ENCODE measurements at regions of chr18 and their contacts with region 1.

Region 1: DNA sequence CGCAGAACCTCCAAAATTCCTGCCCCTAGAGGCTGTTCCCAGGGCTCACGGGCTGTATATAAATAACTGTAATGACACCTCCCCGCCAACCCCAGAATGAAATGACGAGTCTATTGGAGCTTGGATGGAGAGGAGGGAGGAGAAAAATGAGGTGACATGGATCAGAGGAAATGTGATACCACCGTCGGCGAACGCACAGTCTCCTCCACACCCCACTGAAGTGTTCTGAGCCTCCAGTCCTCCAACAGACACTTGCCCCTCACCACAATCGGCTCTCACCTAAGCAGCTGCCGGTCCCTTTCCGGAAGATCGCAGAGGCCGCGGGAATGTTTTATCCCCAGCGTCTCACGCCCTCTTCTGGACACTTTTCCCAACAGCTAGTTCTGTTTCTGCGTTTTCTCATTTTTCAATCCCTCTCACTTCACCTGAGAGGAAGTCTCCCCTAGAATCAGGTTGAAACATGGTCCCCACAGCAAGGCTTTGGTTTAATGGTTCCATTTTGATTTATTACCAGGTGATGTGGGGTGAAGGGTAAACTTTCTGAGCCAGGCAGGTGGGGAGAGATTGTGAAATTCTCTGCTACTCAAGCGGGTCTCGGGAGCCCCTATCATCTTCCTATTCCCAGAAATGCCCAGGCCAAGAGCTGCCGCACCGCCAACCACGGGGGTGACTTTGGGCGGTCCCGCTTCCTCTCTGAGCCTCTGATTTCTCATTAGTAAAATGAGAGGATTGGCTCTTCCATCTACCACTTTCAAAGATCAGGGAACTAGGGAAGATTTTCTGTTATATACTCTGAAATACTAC is 9.1 kb upstream of the MYO5B start:
- DNase-seq: peak; percentile 72
- H3K4me3 Mint-ChIP-seq: no peak overlapping the region
- H3K27ac Mint-ChIP-seq: no peak overlapping the region
- H3K4me1 Mint-ChIP-seq: peaks cover 13% of the 10 kb centered on the region
- H3K27me3 Mint-ChIP-seq: peaks cover 2% of the 10 kb centered on the region
- CTCF ChIP-seq: peak; percentile 73

Region 2: DNA sequence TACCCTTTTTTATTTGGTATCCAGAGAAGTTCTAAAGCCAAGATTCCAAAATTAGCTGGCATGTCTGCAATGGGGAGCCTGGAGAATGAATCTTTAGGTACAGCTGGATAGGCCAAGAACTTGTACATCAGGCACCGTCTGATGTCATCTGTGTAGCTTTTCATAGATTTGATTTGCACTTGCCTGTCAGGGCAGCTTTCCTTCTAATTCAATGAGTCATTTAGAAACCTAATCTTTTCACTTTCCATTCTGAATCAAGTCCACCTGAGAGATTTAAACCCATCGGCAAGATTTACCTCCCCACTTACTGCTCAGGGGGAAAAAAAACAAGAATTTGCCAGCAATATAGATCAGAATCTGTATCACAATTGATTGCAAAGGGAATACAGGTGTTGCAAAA is 329.8 kb before region 1 on chr18:
- CTCF ChIA-PET with region 1: no interaction called
- intact Hi-C with region 1: no loop called
- DNase-seq: no peak
- H3K4me3 Mint-ChIP-seq: no peak overlapping the region
- H3K27ac Mint-ChIP-seq: no peak overlapping the region
- H3K4me1 Mint-ChIP-seq: no peaks in the 10 kb centered on the region
- H3K27me3 Mint-ChIP-seq: no peaks in the 10 kb centered on the region
- CTCF ChIP-seq: no peak

Region 3: DNA sequence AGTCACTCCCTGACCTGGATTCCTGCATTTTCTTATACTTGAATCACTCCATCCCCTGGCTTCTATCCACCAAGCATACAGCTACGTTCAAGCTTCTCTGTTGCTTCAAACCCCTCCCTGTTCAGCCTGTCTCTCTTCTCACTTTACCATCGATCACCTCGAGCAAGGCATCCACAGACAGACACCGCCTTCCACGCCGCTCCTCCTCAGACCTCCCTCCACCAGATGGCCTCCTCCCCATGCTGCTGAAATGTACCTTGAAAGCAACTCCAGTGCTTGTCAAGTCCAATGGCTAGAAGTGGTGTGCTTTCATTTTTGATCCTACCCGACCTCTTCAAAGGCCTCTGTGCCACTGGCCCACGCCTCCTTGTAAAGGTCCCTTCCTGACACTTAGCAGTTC is 259.3 kb before region 1 on chr18:
- CTCF ChIA-PET with region 1: no interaction called
- intact Hi-C with region 1: loop called (anchors 10 kb)
- DNase-seq: peak; percentile 22
- H3K4me3 Mint-ChIP-seq: no peak overlapping the region
- H3K27ac Mint-ChIP-seq: peak overlapping the region; percentile 9
- H3K4me1 Mint-ChIP-seq: peaks cover 11% of the 10 kb centered on the region
- H3K27me3 Mint-ChIP-seq: no peaks in the 10 kb centered on the region
- CTCF ChIP-seq: no peak

Region 4: GRCh38 chr18:50009773-50010335 is 194.1 kb before region 1 on chr18:
- CTCF ChIA-PET with region 1: interaction called, 9 read pairs
- intact Hi-C with region 1: loop called (anchors 2 kb)
- DNase-seq: peak; percentile 75
- H3K4me3 Mint-ChIP-seq: no peak overlapping the region
- H3K27ac Mint-ChIP-seq: no peak overlapping the region
- H3K4me1 Mint-ChIP-seq: peaks cover 49% of the 10 kb centered on the region
- H3K27me3 Mint-ChIP-seq: no peaks in the 10 kb centered on the region
- CTCF ChIP-seq: peak; percentile 83

Region 5: GRCh38 chr18:50091509-50092244 is 112.3 kb before region 1 on chr18:
- CTCF ChIA-PET with region 1: no interaction called
- intact Hi-C with region 1: no loop called
- DNase-seq: no peak
- H3K4me3 Mint-ChIP-seq: no peak overlapping the region
- H3K27ac Mint-ChIP-seq: peak overlapping the region; percentile 34
- H3K4me1 Mint-ChIP-seq: peaks cover 46% of the 10 kb centered on the region
- H3K27me3 Mint-ChIP-seq: no peaks in the 10 kb centered on the region
- CTCF ChIP-seq: no peak